ENCODE measurements at regions of chr16 and their contacts with region 1.

Region 1: DNA sequence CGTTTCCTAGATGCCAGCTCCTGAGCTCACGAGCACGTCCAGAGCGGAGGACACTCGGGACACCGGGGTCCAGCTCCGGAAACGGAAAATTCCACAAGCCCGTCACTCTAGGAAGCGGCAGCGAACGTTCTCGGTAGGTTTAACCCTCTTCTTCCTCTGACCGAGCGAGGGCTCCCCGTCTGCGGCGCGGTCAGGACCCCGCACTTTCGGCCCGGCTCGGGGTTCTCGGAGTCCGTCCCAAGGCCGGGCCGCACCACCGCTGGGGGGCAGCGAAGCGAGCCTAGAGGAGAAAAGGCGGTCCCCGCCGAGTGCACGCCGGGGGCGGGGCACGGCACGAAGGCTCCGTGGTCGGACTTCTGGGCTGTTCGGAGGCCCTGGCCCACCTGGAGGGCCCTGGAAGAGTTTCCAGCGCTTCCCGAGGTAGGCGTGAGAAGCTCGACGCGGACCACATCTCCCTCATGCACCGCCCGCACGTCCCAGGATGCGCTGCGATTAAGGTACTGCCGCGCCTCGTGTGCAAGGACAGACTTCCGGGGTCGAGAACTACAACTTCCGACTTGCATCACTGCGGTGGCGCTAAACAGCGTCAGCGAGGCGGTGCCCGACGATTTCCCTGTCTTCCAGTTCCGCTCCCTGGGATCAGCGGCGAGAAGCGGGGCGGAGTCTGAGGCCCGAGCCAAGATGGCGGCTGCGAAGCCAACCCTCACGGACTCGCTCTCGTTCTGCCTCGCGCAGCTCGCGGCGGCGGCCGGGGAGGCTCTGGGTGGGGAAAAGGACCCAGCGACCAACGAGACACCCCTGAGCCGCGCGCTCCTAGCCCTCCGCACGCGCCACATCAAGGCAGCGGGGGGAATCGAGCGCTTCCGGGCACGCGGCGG is at the start of gene ARMC5:
- DNase-seq: peak; percentile 82
- H3K4me3 ChIP-seq: peak within 1 kb of the TSS; percentile 71
- H3K27me3 ChIP-seq: no peaks in the 10 kb centered on the region
- CTCF ChIP-seq: peak; percentile 82
- polyA plus RNA-seq, gene ARMC5: 3.0 and 6.4 TPM in 2 replicates

Region 2: GRCh38 chr16:31472709-31473203 is 13.7 kb after region 1 on chr16:
- CTCF ChIA-PET with region 1: interaction called, 52 read pairs
- POLR2A ChIA-PET with region 1: interaction called, 6 read pairs
- DNase-seq: peak; percentile 58
- H3K4me3 ChIP-seq: peak overlapping the region; percentile 90
- H3K27me3 ChIP-seq: no peaks in the 10 kb centered on the region
- CTCF ChIP-seq: peak; percentile 82

Measured in BJ (cell line).